Right cardiac atrium (tissue), 5 donors: ENCODE measurements at regions of chr9 and their contacts with region 1.

Region 1: GRCh38 chr9:33721674-33722358 is 73.5 kb upstream of the PRSS3 start:
- DNase-seq: peak; percentile 84 to 94 (median 93)
- ATAC-seq: peak; percentile 77 to 87
- H3K4me3 ChIP-seq: no peak overlapping the region
- H3K27ac ChIP-seq: no peak overlapping the region
- H3K4me1 ChIP-seq: peaks cover 3% of the 10 kb centered on the region
- H3K27me3 ChIP-seq: no peaks in the 10 kb centered on the region

Region 2: DNA sequence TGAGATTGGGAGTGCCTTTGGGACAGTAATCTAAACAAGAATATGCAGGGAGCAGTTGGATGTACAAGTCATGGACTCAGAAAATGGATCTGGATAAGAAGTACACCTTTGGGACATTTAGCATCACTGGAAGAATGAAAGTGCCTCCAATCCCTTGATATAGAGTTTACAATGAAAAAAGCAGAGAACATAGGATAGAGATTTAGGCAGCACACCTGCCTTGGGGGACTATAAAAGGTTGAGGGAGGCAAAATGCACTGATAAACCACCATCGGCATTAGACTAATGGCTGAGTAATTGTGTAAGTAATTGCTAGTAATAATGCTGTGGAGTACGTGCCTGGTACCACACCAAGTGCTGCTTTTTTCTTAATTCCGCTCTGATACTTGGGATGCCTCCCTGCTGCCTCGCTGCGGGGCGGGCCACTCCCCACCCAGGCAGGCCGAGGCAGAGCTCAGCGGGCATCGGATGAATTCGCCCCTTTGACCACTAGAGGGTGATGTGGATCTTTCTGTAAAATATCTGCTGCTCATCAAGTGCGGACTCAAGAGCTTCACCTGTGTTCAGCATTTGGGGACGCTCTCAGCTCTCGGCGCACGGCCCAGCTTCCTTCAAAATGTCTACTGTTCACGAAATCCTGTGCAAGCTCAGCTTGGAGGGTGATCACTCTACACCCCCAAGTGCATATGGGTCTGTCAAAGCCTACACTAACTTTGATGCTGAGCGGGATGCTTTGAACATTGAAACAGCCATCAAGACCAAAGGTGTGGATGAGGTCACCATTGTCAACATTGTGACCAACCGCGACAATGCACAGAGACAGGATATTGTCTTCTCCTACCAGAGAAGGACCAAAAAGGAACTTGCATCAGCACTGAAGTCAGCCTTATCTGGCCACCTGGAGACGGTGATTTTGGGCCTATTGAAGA is 97.9 kb before region 1 on chr9:
- intact Hi-C with region 1: loop called (anchors 2 to 5 kb)
- DNase-seq: peak; percentile 45 to 73 (median 66)
- ATAC-seq: peak; percentile 84 to 90
- H3K4me3 ChIP-seq: no peak overlapping the region
- H3K27ac ChIP-seq: no peak overlapping the region
- H3K4me1 ChIP-seq: no peaks in the 10 kb centered on the region
- H3K27me3 ChIP-seq: no peaks in the 10 kb centered on the region

Region 3: GRCh38 chr9:33628865-33629410 is 92.9 kb before region 1 on chr9:
- intact Hi-C with region 1: loop called (anchors 2 to 5 kb)
- DNase-seq: no peak
- ATAC-seq: no peak
- H3K4me3 ChIP-seq: no peak overlapping the region
- H3K27ac ChIP-seq: no peak overlapping the region
- H3K4me1 ChIP-seq: no peaks in the 10 kb centered on the region
- H3K27me3 ChIP-seq: no peaks in the 10 kb centered on the region